Left ventricle myocardium superior (tissue), 1 donor: ENCODE measurements at regions of chr1 and their contacts with region 1.

Region 1: GRCh38 chr1:244605835-244606370 is 47.0 kb upstream of the DESI2 start:
- DNase-seq: no peak
- ATAC-seq: no peak

Region 2: DNA sequence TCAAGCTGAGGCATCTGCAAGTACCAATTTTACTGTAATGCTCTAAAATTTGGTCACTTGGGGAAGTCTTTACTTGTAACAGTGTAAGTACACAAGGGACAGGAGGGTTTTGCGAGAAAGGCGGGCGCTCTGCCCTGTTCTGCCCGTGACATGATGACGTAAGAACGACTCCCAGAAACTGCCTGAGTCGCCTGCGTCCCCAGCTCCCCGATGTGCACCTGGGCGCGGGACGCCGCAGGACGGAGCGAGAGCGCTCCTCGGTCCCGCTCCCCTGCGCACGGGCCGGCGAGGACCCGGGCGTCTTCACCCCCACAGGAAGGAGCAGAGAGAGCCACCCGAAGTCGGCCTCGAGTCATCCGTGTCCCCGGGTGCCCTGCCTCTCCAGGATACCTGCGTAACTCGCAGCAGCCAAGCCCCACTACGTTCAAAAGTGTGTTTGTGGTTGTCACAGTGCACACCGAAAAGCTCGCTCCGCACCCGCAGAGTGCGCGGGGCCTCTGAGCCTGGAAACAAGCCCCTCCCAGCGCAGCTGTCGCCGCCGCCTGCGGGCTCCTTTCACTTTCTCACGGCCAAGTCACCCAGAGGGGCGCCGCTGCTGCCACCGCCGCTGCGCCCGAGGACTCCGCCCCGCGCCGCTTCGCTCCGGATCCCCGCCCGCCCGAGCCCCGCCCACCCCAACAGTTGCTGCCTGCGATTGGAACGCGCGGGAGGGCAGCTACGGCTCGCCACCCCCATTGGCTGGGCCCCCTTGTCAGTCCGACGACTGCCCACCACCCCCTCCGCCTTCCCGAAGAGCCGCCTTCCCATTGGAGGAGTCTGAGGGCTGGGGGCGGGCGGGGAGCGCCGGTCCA is 558.1 kb before region 1 on chr1:
- intact Hi-C with region 1: no loop called
- DNase-seq: peak; percentile 99
- ATAC-seq: peak; percentile 96

Region 3: GRCh38 chr1:244473059-244473605 is 132.8 kb before region 1 on chr1:
- intact Hi-C with region 1: no loop called
- DNase-seq: no peak
- ATAC-seq: no peak

Region 4: GRCh38 chr1:244801246-244801645 is 195.3 kb after region 1 on chr1:
- intact Hi-C with region 1: loop called (anchors 2 kb)
- DNase-seq: no peak
- ATAC-seq: peak; percentile 61